Left lung (tissue), 14 donors: ENCODE measurements at regions of chr22 and their contacts with region 1.

Region 1: DNA sequence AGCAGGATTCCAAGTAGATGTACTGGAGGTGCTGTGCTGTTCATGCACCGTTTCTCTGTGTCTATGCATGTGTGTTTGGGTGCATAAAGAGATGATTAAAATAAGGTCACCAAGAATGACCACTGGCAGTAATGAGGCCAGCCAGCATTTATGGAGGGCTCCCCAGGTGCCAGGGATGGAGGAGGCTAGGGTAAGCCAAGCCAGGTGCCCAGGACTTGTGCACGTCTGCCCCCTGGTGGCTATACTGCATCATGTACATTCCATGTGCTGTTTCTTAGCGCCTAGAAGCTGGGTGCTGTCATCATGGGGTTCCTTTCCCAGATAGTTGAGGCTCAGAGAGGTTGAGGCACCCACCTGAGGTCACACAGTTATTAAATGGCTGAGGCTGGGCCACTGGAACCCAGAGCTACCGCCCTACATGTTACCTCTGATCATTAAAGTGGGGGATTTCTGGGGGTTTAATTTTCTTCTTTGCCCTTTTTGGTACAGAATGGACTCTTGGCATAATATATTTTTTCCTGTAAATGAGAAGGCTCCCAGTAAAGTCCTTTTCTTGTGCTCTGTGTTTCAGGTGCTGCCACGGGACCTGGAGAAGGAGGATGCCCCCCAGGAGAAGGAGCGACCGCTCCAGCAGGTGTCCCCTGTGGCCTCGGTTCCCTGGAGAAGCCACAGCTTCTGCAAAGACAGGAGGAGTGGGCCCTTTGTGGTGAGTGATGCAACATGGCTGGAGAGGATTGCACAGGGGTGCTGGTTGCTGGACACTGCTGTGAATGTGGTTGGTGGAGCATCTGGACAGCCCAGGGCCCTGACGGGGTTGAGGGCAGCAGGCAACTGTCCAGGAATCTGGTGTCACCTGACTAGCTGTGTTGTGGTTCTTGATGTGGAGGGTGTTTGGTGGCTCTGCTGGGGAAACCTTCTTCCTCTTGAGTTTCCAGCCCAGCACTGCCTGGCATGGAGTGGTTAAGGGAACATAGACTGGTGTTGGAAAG is 96.4 kb downstream of the KIAA1671 start:
- DNase-seq: peak in 2 of 4 donors; percentile 18 to 58
- ATAC-seq: peak; percentile 97
- H3K4me3 ChIP-seq: no peak overlapping the region
- H3K27ac ChIP-seq: no peak overlapping the region
- H3K4me1 ChIP-seq: no peaks in the 10 kb centered on the region
- H3K27me3 ChIP-seq: no peaks in the 10 kb centered on the region
- CTCF ChIP-seq: peak; percentile 85 to 86

Region 2: DNA sequence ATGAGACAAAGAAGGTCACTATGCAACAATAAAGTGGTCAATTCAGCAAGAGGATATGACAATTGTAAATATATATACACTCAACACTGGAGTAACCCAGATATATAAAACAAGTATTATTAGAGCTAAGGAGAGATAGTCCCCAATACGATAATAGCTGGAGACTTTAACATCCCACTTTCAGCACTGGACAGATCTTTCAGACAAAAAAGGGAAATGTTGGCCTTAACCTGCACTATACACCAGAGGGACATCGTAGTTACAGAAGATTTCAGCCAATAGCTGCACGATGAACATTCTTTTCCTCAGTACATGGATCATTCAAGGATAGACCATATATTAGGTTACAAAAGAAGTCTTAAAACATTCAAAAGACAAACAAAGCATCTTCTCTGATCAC is 304.3 kb before region 1 on chr22:
- intact Hi-C with region 1: no loop called
- DNase-seq: no peak
- ATAC-seq: no peak
- H3K4me3 ChIP-seq: no peak overlapping the region
- H3K27ac ChIP-seq: no peak overlapping the region
- H3K4me1 ChIP-seq: no peaks in the 10 kb centered on the region
- H3K27me3 ChIP-seq: peaks cover 0 to 4% of the 10 kb centered on the region in 2 donors
- CTCF ChIP-seq: no peak

Region 3: DNA sequence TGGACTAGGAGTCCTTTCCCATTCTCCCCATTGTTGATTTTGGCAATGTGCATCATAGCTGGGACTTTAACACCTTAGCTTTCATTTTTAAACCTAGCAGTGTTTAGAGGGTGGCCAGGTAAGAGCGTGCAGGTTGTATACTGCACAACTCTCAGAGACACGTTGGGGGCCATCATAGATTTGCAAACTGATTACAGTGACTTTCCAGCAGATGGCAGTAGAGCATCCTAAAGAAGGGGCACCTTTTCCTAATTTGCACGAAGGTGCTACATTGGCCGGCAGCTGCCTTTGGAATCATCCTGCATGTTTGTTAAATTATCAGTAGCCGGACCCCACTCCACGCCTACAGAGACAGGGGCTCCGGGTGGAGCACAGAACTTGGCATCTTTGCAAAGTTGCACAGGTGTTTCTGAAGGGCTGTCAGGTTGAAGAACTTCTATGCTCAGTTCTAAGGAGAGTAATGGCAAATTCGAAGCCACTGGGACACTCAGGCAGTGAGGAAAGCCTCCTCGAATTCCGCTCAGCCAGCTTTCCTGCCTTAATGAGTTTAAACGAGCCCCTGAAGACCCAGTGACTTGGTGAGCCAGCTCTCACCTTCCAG is 110.1 kb before region 1 on chr22:
- intact Hi-C with region 1: loop called (anchors 5 to 10 kb)
- DNase-seq: peak in 2 of 4 donors; percentile 13 to 31
- ATAC-seq: peak; percentile 87
- H3K4me3 ChIP-seq: no peak overlapping the region
- H3K27ac ChIP-seq: no peak overlapping the region
- H3K4me1 ChIP-seq: no peaks in the 10 kb centered on the region
- H3K27me3 ChIP-seq: no peaks in the 10 kb centered on the region
- CTCF ChIP-seq: peak; percentile 65 to 67

Region 4: GRCh38 chr22:24951942-24952836 is 96.8 kb before region 1 on chr22 and contains the start of gene KIAA1671:
- intact Hi-C with region 1: loop called (anchors 5 to 10 kb)
- DNase-seq: peak; percentile 57 to 94 (median 86)
- ATAC-seq: peak; percentile 97
- H3K4me3 ChIP-seq: peak within 1 kb of the TSS; percentile 71 to 73
- H3K27ac ChIP-seq: peak within 1 kb of the TSS; percentile 70 to 81
- H3K4me1 ChIP-seq: peaks cover 4 to 15% of the 10 kb centered on the region in 2 donors
- H3K27me3 ChIP-seq: peaks cover 10 to 56% of the 10 kb centered on the region in 2 donors
- CTCF ChIP-seq: peak; percentile 84 to 94
- polyA plus RNA-seq, gene KIAA1671: 19.4 to 24.4 (median 23.0) TPM